ENCODE measurements at regions of chr9 and their contacts with region 1.

Region 1: DNA sequence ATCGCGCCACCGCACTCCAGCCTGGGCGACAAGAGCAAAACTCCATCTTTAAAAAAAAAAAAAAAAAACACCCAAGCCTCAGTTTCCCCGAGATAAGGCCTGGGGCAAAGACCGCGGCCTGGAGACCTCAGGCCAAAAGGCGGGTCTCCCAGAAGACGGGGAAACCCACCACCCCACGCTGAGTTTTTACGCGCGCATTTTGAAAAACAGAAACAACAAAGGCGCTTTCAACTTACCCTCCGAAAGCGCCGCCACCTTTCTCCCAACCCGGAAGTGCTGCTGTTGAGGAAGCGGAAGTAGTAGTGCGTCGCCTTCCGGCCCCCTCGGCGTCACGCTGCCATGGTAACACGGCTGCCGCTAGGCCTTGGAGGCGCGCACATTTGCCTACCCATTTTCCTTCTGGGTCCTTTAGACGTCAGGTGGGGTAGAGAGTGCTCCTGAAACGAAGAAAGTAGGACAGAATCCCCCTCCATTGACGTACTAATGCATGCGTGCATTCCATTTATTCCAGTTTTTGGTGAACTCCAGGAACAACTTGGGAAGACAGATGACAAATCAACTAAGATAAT is at the start of gene TTF1:
- DNase-seq: peak; percentile 88
- ATAC-seq: peak; percentile 86
- H3K4me3 ChIP-seq: peak within 1 kb of the TSS; percentile 68 to 95 (median 78)
- H3K27ac ChIP-seq: no peak within 1 kb of the TSS
- H3K4me1 ChIP-seq: peaks cover 40% of the 10 kb centered on the region
- H3K27me3 ChIP-seq: peaks cover 0 to 23% of the 10 kb centered on the region in 2 experiments; a peak in 3 of 5 replicates
- CTCF ChIP-seq: no peak
- EP300 ChIP-seq: no peak
- POLR2A ChIP-seq: peak; percentile 69 to 84
- RAD21 ChIP-seq: no peak
- total RNA-seq, gene TTF1: 9.8 and 11.8 TPM in 2 replicates

Region 2: DNA sequence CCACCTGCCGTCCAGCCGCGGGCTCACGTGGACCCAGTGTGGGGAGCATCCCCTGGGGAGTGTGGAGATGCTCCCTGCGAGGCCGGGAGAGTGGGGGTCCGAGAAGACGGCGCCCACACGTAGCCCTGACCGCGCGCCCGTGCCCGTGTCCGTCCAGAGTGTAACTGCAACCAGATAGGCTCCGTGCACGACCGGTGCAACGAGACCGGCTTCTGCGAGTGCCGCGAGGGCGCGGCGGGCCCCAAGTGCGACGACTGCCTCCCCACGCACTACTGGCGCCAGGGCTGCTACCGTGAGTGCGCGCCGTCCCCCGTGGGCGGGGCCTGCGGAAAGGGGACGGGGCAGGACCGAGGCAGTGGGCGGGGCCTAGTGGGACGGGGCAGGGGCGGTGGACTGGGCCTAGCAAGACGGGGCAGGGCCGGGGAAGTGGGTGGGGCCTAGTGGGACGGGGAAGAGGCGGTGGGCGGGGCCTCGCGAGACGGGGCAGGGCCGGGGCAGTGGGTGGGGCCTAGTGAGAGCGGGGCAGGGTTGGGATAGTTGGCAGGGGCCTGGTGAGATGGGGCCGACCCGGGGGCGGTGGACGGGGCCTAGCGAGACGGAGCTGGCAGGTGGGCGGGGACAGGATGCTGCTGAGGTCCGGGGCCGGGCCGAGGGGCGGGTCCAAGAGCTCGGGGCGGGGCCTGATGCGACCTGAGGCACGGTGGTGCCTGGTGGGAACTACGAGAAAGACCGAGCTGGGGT is 165.7 kb before region 1 on chr9:
- CTCF ChIA-PET with region 1: no interaction called
- POLR2A ChIA-PET with region 1: no interaction called
- in situ Hi-C with region 1: no loop called
- intact Hi-C with region 1: loop called (anchors 5 kb)
- DNase-seq: peak; percentile 77
- ATAC-seq: peak; percentile 76
- H3K4me3 ChIP-seq: peak overlapping the region; percentile 65 to 73 (median 66); a peak in 4 of 6 replicates
- H3K27ac ChIP-seq: no peak overlapping the region
- H3K4me1 ChIP-seq: peaks cover 16% of the 10 kb centered on the region
- H3K27me3 ChIP-seq: peaks cover 16 to 70% of the 10 kb centered on the region in 2 experiments; a peak in 4 of 5 replicates
- CTCF ChIP-seq: 0 out of 2 replicates have a peak, but pooled peaks have one; percentile 1
- EP300 ChIP-seq: no peak
- POLR2A ChIP-seq: no peak
- RAD21 ChIP-seq: no peak

Region 3: DNA sequence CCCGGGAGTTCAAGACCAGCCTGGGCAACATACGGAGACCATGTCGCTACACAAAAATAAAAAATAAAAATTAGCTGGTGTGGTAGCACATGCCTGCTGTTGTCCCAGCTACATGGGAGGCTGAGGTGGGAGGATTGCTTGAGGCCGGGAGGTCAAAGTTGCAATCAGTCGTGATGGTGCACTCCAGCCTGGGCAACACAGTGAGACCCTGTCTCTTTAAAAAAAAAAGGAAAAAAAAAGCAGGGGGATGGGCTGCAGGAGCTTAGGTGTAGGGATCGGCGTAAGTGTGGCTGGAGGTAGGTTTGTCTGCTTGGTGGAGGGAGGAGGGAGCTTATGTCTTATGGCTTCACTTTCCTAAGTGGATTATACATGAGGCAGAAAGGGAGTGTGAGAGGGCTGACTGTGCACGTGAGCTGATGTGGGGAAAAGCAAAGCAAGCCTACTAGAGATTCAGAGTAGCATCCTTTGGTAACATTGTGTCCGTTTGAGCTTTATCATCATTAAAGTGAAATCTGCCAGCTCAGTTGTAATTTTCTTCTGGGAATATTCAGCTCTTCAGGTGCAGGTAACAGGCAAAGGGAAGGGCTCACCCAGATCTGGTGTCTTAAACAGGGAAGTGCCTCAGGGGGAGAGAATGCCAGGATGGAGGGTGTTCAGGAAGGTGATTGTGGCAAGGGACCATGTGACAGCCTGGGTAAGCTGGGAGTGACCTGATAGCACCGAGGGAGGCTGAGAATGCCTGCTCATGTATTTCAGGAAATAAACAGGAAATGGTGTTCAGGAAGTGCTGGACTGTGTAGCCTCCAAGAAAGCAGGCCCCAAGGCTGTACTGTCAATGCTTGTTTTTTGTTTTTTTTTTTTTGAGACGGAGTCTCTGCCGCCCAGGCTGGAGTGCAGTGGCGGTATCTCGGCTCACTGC is 34.2 kb before region 1 on chr9:
- CTCF ChIA-PET with region 1: no interaction called
- POLR2A ChIA-PET with region 1: no interaction called
- in situ Hi-C with region 1: no loop called
- intact Hi-C with region 1: no loop called
- DNase-seq: no peak
- ATAC-seq: no peak; the same call in 1 of the 3 replicates
- H3K4me3 ChIP-seq: no peak overlapping the region
- H3K27ac ChIP-seq: no peak overlapping the region
- H3K4me1 ChIP-seq: no peaks in the 10 kb centered on the region
- H3K27me3 ChIP-seq: peaks cover 0 to 2% of the 10 kb centered on the region in 2 experiments; a peak in 1 of 5 replicates
- CTCF ChIP-seq: no peak
- EP300 ChIP-seq: no peak
- POLR2A ChIP-seq: no peak
- RAD21 ChIP-seq: no peak

Region 4: GRCh38 chr9:132507746-132508469 is 101.3 kb after region 1 on chr9:
- CTCF ChIA-PET with region 1: interaction called, 4 read pairs
- POLR2A ChIA-PET with region 1: no interaction called
- in situ Hi-C with region 1: loop called (anchors 10 kb)
- intact Hi-C with region 1: loop called (anchors 10 kb)
- DNase-seq: peak; percentile 35
- ATAC-seq: peak; percentile 82
- H3K4me3 ChIP-seq: no peak overlapping the region
- H3K27ac ChIP-seq: no peak overlapping the region
- H3K4me1 ChIP-seq: no peaks in the 10 kb centered on the region
- H3K27me3 ChIP-seq: peaks cover 9 to 69% of the 10 kb centered on the region in 2 experiments
- CTCF ChIP-seq: peak; percentile 83
- EP300 ChIP-seq: no peak
- POLR2A ChIP-seq: no peak
- RAD21 ChIP-seq: peak; percentile 72

Region 5: GRCh38 chr9:132575005-132575609 is 168.5 kb after region 1 on chr9:
- CTCF ChIA-PET with region 1: interaction called, 22 read pairs
- POLR2A ChIA-PET with region 1: no interaction called
- in situ Hi-C with region 1: loop called (anchors 5 kb)
- intact Hi-C with region 1: no loop called
- DNase-seq: peak; percentile 48
- ATAC-seq: peak; percentile 93
- H3K4me3 ChIP-seq: no peak overlapping the region
- H3K27ac ChIP-seq: no peak overlapping the region
- H3K4me1 ChIP-seq: no peaks in the 10 kb centered on the region
- H3K27me3 ChIP-seq: peaks cover 7 to 30% of the 10 kb centered on the region in 2 experiments
- CTCF ChIP-seq: peak; percentile 93
- EP300 ChIP-seq: no peak
- POLR2A ChIP-seq: no peak
- RAD21 ChIP-seq: peak; percentile 92

Region 6: GRCh38 chr9:132800038-132800648 is 393.5 kb after region 1 on chr9:
- CTCF ChIA-PET with region 1: interaction called, 4 read pairs
- POLR2A ChIA-PET with region 1: no interaction called
- in situ Hi-C with region 1: loop called (anchors 5 kb)
- intact Hi-C with region 1: no loop called
- DNase-seq: peak; percentile 54
- ATAC-seq: peak; percentile 74
- H3K4me3 ChIP-seq: no peak overlapping the region
- H3K27ac ChIP-seq: no peak overlapping the region
- H3K4me1 ChIP-seq: peaks cover 19% of the 10 kb centered on the region
- H3K27me3 ChIP-seq: peaks cover 4 to 40% of the 10 kb centered on the region in 2 experiments; a peak in 4 of 5 replicates
- CTCF ChIP-seq: peak; percentile 90
- EP300 ChIP-seq: no peak
- POLR2A ChIP-seq: no peak
- RAD21 ChIP-seq: peak; percentile 89